SK-N-SH (cell line): ENCODE measurements at regions of chr17 and their contacts with region 1.

Region 1: DNA sequence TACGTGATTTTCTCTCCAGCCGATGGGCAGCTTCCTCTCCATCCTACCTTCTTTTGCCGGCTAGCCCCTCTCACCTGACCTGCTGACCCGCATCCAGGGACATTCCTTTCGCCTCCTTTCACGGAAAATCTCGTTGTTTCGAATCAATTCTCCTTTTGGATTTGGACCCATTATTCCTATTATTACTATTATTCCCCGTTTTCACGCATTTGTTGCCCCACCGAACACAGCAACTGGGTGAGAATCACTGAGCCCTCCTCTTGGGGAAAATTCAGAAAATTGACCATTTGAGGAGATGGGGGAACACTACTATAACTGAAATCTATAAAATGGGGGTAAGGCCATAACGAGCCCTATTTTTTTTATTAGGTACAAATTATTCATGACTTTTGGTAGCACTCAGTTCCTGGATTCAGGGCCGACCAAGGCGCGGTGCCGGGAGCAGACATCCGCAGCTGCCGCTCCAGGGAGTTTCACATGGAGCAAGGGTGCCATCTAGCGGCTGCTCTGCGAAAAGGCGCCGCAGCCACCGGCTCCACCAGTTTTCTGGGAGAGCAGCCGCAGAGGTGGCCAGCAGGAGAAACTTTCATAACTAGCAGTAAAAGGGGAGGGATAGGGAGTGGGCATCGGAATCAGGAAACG is 3.3 kb upstream of the HOXB8 start:
- DNase-seq: peak; percentile 98
- H3K4me3 ChIP-seq: no peak overlapping the region
- H3K27ac ChIP-seq: no peak overlapping the region
- H3K4me1 ChIP-seq: no peaks in the 10 kb centered on the region
- H3K27me3 ChIP-seq: peaks cover 100% of the 10 kb centered on the region
- CTCF ChIP-seq: peak; percentile 100
- EP300 ChIP-seq: no peak
- RAD21 ChIP-seq: peak; percentile 97

Region 2: GRCh38 chr17:48030531-48030930 is 587.8 kb before region 1 on chr17:
- CTCF ChIA-PET with region 1: interaction called, 16 read pairs
- POLR2A ChIA-PET with region 1: no interaction called
- DNase-seq: no peak
- H3K4me3 ChIP-seq: no peak overlapping the region
- H3K27ac ChIP-seq: no peak overlapping the region
- H3K4me1 ChIP-seq: peaks cover 8 to 14% of the 10 kb centered on the region in 2 experiments; a peak in 3 of 4 replicates
- H3K27me3 ChIP-seq: no peaks in the 10 kb centered on the region
- CTCF ChIP-seq: no peak
- EP300 ChIP-seq: no peak
- RAD21 ChIP-seq: no peak

Region 3: GRCh38 chr17:48259694-48260291 is 358.6 kb before region 1 on chr17:
- CTCF ChIA-PET with region 1: interaction called, 17 read pairs
- POLR2A ChIA-PET with region 1: no interaction called
- DNase-seq: no peak
- H3K4me3 ChIP-seq: no peak overlapping the region; a peak in 1 of 4 replicates
- H3K27ac ChIP-seq: no peak overlapping the region
- H3K4me1 ChIP-seq: no peaks in the 10 kb centered on the region
- H3K27me3 ChIP-seq: peaks cover 66% of the 10 kb centered on the region
- CTCF ChIP-seq: peak; percentile 56
- EP300 ChIP-seq: no peak
- RAD21 ChIP-seq: peak; percentile 37

Region 4: DNA sequence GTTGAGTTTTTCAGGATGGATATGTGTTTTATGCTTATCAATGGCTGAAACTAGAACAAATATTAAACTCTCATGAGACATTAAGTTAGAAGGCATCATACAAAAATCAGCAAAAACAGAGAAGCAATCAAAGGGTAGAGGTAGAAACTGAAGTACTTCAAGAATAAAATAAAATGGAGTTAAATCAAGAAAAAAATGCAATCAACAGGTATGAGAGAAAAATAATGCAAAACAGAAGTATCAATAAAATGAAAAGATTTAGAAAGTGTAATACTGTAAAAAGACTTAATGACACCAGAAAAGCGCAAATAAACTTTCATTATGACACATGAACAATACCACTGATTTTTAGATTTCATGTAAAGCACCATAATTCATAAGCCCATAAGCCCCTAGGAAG is 300.6 kb before region 1 on chr17:
- CTCF ChIA-PET with region 1: interaction called, 12 read pairs
- POLR2A ChIA-PET with region 1: no interaction called
- DNase-seq: no peak
- H3K4me3 ChIP-seq: no peak overlapping the region
- H3K27ac ChIP-seq: no peak overlapping the region
- H3K4me1 ChIP-seq: no peaks in the 10 kb centered on the region
- H3K27me3 ChIP-seq: peaks cover 53% of the 10 kb centered on the region
- CTCF ChIP-seq: no peak
- EP300 ChIP-seq: no peak
- RAD21 ChIP-seq: no peak

Region 5: DNA sequence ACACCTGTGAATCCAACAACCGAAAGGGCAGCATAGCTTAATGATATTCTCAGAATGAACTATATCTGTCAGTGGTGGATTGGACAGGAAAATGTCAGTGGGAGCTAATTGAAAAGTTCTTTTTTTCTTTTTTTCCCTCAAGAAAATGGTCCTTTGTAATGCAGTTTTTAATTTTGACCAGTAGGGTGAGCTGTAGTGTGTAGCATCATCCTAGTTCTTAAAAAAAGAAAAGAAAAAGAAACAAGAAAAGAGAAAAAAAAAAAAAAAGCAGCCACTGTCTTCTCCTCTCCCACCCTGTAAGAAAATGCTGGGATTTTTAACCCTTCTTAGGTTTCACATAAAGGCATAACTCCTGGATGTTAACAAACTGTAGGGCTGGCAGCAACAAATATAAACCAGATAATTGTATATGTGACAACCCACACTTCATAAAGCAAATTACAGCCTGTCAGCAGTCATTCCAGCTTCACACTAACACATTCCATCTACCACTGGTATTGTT is 266.5 kb before region 1 on chr17:
- CTCF ChIA-PET with region 1: interaction called, 21 read pairs
- POLR2A ChIA-PET with region 1: no interaction called
- DNase-seq: peak; percentile 32
- H3K4me3 ChIP-seq: no peak overlapping the region; a peak in 1 of 4 replicates
- H3K27ac ChIP-seq: no peak overlapping the region
- H3K4me1 ChIP-seq: no peaks in the 10 kb centered on the region
- H3K27me3 ChIP-seq: peaks cover 50% of the 10 kb centered on the region
- CTCF ChIP-seq: peak; percentile 94
- EP300 ChIP-seq: no peak
- RAD21 ChIP-seq: peak; percentile 62

Region 6: GRCh38 chr17:48593840-48594537 is 24.4 kb before region 1 on chr17:
- CTCF ChIA-PET with region 1: interaction called, 20 read pairs
- POLR2A ChIA-PET with region 1: no interaction called
- DNase-seq: peak; percentile 96
- H3K4me3 ChIP-seq: no peak overlapping the region; a peak in 1 of 4 replicates
- H3K27ac ChIP-seq: no peak overlapping the region
- H3K4me1 ChIP-seq: 0 out of 4 replicates have a peak, but pooled peaks cover 0 to 4% of the 10 kb centered on the region in 2 experiments
- H3K27me3 ChIP-seq: peaks cover 98% of the 10 kb centered on the region
- CTCF ChIP-seq: peak; percentile 97
- EP300 ChIP-seq: no peak
- RAD21 ChIP-seq: peak; percentile 86

Region 7: DNA sequence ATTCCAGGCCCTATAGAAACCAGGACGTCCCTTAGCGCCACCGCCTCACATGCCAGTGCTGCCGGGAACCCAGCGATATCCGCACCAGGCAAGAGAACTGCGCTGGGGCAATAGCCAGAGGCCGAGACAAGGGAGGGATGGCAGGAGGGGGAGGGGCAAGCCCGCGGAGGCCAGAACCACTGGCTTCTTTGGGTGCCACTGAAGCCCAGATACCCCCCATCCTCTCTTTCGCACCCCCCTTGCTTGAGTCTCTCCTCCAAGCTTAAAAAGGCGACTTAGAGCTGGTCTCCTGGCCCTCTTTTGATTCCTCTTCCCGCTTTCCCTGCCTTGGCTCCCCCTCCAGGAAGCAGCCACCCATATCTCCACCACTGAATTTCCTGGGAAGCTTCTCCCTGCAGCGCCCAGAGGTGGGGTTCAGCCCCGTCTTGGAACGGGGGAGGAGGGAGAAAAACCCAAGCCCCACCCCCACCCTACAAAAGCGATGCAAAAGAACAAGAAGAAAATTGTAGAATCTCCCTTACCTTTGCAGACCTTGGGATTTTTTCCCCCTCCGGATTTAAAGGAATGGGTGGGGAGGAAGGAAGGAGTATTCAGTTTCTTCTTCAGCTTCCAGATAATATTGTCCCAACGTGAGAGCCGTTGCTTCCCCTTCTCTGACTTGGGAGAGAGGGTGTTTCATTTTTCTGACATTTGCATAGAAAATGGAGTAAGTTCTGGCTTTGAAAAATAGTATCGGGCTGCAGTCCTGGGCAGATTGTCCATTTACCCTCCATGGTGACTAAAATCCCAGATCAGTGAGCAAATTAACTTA is 14.2 kb before region 1 on chr17:
- CTCF ChIA-PET with region 1: no interaction called
- POLR2A ChIA-PET with region 1: no interaction called
- DNase-seq: no peak
- H3K4me3 ChIP-seq: no peak overlapping the region
- H3K27ac ChIP-seq: no peak overlapping the region
- H3K4me1 ChIP-seq: no peaks in the 10 kb centered on the region; a peak in 1 of 4 replicates
- H3K27me3 ChIP-seq: peaks cover 100% of the 10 kb centered on the region
- CTCF ChIP-seq: no peak
- EP300 ChIP-seq: no peak
- RAD21 ChIP-seq: no peak

Region 8: GRCh38 chr17:48636177-48637018 is 18.0 kb after region 1 on chr17:
- CTCF ChIA-PET with region 1: interaction called, 50 read pairs
- POLR2A ChIA-PET with region 1: no interaction called
- DNase-seq: peak; percentile 91
- H3K4me3 ChIP-seq: peak overlapping the region in 1 of 2 experiments; percentile 21; a peak in 1 of 4 replicates
- H3K27ac ChIP-seq: no peak overlapping the region
- H3K4me1 ChIP-seq: no peaks in the 10 kb centered on the region
- H3K27me3 ChIP-seq: peaks cover 100% of the 10 kb centered on the region
- CTCF ChIP-seq: peak; percentile 69
- EP300 ChIP-seq: no peak
- RAD21 ChIP-seq: no peak

Region 9: DNA sequence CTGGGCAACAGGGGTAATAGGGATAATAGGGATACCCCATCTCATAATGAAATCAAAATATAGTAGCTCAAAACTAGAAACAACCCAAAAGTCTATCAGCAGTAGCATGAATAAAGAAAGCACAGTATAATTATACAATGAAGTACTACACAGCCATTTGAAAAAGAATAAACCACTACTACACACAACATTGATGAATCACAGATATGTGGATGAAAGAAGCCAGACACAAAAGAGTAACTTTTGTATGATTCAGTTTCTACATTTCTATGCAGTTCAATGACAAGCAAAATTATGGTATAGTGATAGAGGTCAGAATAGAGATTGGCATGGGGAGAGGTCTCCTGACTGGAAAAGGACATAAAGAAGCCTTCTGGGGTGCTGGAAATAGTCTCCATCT is 113.0 kb after region 1 on chr17:
- CTCF ChIA-PET with region 1: no interaction called
- POLR2A ChIA-PET with region 1: no interaction called
- DNase-seq: no peak
- H3K4me3 ChIP-seq: no peak overlapping the region
- H3K27ac ChIP-seq: no peak overlapping the region
- H3K4me1 ChIP-seq: no peaks in the 10 kb centered on the region
- H3K27me3 ChIP-seq: peaks cover 99% of the 10 kb centered on the region
- CTCF ChIP-seq: no peak
- EP300 ChIP-seq: no peak
- RAD21 ChIP-seq: no peak